ENCODE measurements at regions of chr4 and their contacts with region 1.

Region 1: DNA sequence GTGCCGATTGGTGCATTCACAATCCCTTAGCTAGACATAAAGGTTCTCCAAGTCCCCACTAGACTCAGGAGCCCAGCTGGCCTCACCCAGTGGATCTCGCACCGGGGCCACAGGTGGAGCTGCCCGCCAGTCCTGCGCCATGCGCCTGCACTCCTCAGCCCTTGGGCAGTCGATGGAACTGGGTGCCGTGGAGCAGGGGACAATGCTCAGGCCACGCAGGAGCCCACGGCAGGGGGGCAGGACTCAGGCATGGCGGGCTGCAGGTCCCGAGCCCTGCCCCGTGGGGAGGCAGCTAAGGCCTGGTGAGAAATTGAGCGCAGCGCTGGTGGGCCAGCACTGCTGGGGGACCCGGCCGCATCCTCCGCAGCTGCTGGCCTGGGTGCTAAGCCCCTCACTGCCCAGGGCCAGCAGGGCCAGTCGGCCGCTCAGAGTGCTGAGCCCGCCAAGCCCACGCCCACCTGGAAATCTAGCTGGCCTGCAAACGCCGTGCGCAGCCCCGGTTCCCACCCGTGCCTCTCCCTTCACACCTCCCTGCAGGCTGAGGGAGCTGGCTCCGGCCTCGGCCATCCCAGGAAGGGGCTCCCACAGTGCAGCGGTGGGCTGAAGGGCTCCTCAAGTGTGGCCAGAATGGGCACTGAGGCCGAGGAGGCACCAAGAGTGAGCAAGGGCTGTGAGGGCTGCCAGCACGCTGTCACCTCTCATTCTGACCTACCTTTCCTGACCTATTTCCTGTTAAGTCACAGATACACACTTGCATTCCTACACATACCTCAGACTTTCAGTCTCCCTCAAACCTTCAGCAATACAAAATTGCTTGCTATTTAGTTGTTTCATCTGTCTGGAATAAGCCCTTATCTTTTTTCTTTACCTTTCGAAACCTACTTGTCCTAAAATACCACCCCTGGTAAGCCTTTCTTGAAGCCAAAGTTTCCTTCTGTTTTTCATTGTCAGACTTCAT is 20.7 kb downstream of the UBE2K start:
- DNase-seq: no peak
- ATAC-seq: peak; percentile 28
- H3K4me3 ChIP-seq: no peak overlapping the region
- H3K27ac ChIP-seq: peak overlapping the region; percentile 42; the same call in 1 of the 2 replicates
- H3K4me1 ChIP-seq: peaks cover 40% of the 10 kb centered on the region
- H3K27me3 ChIP-seq: no peaks in the 10 kb centered on the region
- CTCF ChIP-seq: no peak
- EP300 ChIP-seq: no peak
- POLR2A ChIP-seq: no peak
- RAD21 ChIP-seq: no peak

Region 2: GRCh38 chr4:39544580-39545315 is 173.9 kb before region 1 on chr4:
- CTCF ChIA-PET with region 1: no interaction called
- POLR2A ChIA-PET with region 1: no interaction called
- RAD21 ChIA-PET with region 1: no interaction called
- SMC1A ChIA-PET with region 1: no interaction called
- in situ Hi-C with region 1: no loop called
- intact Hi-C with region 1: no loop called
- DNase-seq: no peak
- ATAC-seq: no peak
- H3K4me3 ChIP-seq: no peak overlapping the region
- H3K27ac ChIP-seq: no peak overlapping the region
- H3K4me1 ChIP-seq: no peaks in the 10 kb centered on the region
- H3K27me3 ChIP-seq: no peaks in the 10 kb centered on the region
- CTCF ChIP-seq: no peak
- EP300 ChIP-seq: no peak
- POLR2A ChIP-seq: no peak
- RAD21 ChIP-seq: no peak

Region 3: DNA sequence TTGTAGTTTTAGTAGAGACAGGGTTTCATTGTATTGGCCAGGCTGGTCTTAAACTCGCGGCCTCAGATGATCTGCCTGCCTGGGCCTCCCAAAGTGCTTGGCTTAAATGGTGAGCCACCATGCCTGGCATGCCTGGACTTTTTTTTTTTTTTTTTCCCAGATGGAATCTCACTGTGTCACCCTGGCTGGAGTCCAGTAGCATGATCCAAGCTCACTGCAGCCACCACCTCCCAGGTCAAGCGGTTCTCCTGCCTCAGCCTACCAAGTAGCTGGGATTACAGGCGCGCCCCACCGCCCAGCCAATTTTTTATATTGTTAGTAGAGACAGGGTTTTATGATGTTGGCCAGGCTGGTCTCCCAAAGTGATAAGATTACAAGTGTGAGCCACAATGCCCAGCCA is 12.3 kb before region 1 on chr4:
- CTCF ChIA-PET with region 1: interaction called, 5 read pairs
- POLR2A ChIA-PET with region 1: interaction called, 4 read pairs
- RAD21 ChIA-PET with region 1: interaction called, 3 read pairs
- SMC1A ChIA-PET with region 1: interaction called, 11 read pairs
- in situ Hi-C with region 1: no loop called
- intact Hi-C with region 1: no loop called
- DNase-seq: no peak
- ATAC-seq: peak; percentile 15
- H3K4me3 ChIP-seq: no peak overlapping the region
- H3K27ac ChIP-seq: no peak overlapping the region
- H3K4me1 ChIP-seq: peaks cover 29% of the 10 kb centered on the region
- H3K27me3 ChIP-seq: no peaks in the 10 kb centered on the region
- CTCF ChIP-seq: no peak
- EP300 ChIP-seq: no peak
- POLR2A ChIP-seq: no peak
- RAD21 ChIP-seq: no peak

Region 4: GRCh38 chr4:39763714-39764572 is 45.3 kb after region 1 on chr4:
- CTCF ChIA-PET with region 1: no interaction called
- POLR2A ChIA-PET with region 1: no interaction called
- RAD21 ChIA-PET with region 1: no interaction called
- SMC1A ChIA-PET with region 1: no interaction called
- in situ Hi-C with region 1: no loop called
- intact Hi-C with region 1: loop called (anchors 5 kb)
- DNase-seq: peak; percentile 66
- ATAC-seq: peak; percentile 87
- H3K4me3 ChIP-seq: no peak overlapping the region
- H3K27ac ChIP-seq: peak overlapping the region; percentile 61
- H3K4me1 ChIP-seq: peaks cover 19% of the 10 kb centered on the region
- H3K27me3 ChIP-seq: no peaks in the 10 kb centered on the region
- CTCF ChIP-seq: no peak
- EP300 ChIP-seq: peak; percentile 39 to 77; a peak in 2 of 4 replicates
- POLR2A ChIP-seq: no peak
- RAD21 ChIP-seq: no peak